GM13977 (cell line): ENCODE measurements at regions of chrX and their contacts with region 1.

Region 1: DNA sequence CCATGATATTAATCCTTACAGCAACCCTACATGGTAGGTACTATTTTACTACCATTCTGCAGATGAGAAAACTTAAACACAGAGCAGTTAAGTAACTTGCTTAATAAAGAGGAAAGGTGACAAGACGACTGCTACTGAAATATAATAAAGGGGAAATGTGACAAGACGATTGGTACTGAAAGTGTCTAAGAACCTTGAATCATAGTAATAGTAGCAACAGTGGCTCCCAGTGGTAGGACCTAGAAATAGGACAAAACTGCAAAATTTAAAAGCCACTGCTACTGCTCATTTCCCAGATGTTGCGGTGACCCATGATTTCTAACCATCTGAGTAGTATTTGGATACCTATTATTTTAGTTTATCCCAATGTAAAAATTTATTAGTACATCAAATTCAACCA is 89.5 kb downstream of the TASL start:
- DNase-seq: peak; percentile 22
- CTCF ChIP-seq: peak; percentile 42

Region 2: GRCh38 chrX:30141966-30142365 is 346.1 kb before region 1 on chrX:
- in situ Hi-C with region 1: loop called (anchors 25 kb)
- DNase-seq: peak; percentile 44
- CTCF ChIP-seq: peak; percentile 52